GM18951 (cell line): ENCODE measurements at regions of chr22 and their contacts with region 1.

Region 1: GRCh38 chr22:45612451-45612901 is 59.2 kb upstream of the ATXN10 start:
- POLR2A ChIP-seq: no peak

Region 2: GRCh38 chr22:47593911-47594311 is 1981.4 kb after region 1 on chr22:
- in situ Hi-C with region 1: loop called (anchors 10 kb)
- POLR2A ChIP-seq: no peak